K562 (cell line): ENCODE measurements at regions of chr4 and their contacts with region 1.

Region 1: DNA sequence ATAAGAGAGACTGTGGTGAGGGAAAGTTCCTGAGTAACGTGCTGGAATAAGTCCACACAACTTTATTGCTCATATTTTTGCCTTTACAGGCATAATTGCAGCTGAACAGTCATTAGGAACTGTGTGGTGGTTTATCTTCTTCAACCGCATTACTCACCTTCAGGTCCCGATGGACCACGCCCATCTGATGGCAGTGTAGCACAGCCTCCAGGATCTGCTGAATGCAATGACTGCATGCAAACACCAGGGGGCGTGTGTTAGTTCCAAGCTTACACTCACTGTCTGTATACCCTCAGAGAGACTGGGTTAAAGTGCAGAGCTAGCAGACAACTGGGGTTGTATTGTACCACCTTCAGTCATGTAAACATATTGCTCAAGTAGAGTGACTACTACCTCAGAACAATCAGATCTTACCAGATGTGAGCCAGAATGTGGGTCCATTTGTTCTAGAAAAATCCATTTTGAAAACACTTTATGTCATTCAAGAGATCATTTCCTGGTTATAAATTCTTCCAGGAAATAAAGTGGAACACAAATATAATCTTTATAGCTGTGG is 214.0 kb downstream of the CAMK2D start:
- DNase-seq: peak; percentile 63 to 87 (median 71)
- ATAC-seq: peak; percentile 100
- H3K4me3 ChIP-seq: no peak overlapping the region
- H3K27ac ChIP-seq: no peak overlapping the region
- H3K4me1 ChIP-seq: no peaks in the 10 kb centered on the region
- H3K27me3 ChIP-seq: no peaks in the 10 kb centered on the region
- CTCF ChIP-seq: peak; percentile 71 to 89 (median 88)
- EP300 ChIP-seq: no peak
- POLR2A ChIP-seq: no peak
- RAD21 ChIP-seq: peak; percentile 22 to 58

Region 2: GRCh38 chr4:113761620-113762185 is 214.1 kb after region 1 on chr4 and contains the start of gene CAMK2D:
- CTCF ChIA-PET with region 1: no interaction called
- POLR2A ChIA-PET with region 1: no interaction called
- in situ Hi-C with region 1: no loop called
- intact Hi-C with region 1: loop called (anchors 10 kb)
- DNase-seq: peak in 1 of 4 experiments; percentile 2
- ATAC-seq: peak; percentile 46
- H3K4me3 ChIP-seq: peak within 1 kb of the TSS; percentile 24; the same call in 1 of the 2 replicates
- H3K27ac ChIP-seq: no peak within 1 kb of the TSS
- H3K4me1 ChIP-seq: peaks cover 0 to 7% of the 10 kb centered on the region in 2 experiments; a peak in 2 of 5 replicates
- H3K27me3 ChIP-seq: no peaks in the 10 kb centered on the region
- CTCF ChIP-seq: no peak
- EP300 ChIP-seq: no peak
- POLR2A ChIP-seq: no peak
- RAD21 ChIP-seq: no peak
- polyA plus RNA-seq, gene CAMK2D: 0.01 to 0.04 TPM